ENCODE measurements at regions of chr1 and their contacts with region 1.

Region 1: GRCh38 chr1:64499966-64500365 is 30.0 kb downstream of the CACHD1 start:
- DNase-seq: no peak
- ATAC-seq: peak; percentile 66; the same call in 1 of the 2 replicates
- H3K4me3 ChIP-seq: no peak overlapping the region
- H3K27ac ChIP-seq: no peak overlapping the region
- H3K4me1 ChIP-seq: peaks cover 37% of the 10 kb centered on the region
- H3K27me3 ChIP-seq: no peaks in the 10 kb centered on the region
- CTCF ChIP-seq: peak; percentile 34

Region 2: DNA sequence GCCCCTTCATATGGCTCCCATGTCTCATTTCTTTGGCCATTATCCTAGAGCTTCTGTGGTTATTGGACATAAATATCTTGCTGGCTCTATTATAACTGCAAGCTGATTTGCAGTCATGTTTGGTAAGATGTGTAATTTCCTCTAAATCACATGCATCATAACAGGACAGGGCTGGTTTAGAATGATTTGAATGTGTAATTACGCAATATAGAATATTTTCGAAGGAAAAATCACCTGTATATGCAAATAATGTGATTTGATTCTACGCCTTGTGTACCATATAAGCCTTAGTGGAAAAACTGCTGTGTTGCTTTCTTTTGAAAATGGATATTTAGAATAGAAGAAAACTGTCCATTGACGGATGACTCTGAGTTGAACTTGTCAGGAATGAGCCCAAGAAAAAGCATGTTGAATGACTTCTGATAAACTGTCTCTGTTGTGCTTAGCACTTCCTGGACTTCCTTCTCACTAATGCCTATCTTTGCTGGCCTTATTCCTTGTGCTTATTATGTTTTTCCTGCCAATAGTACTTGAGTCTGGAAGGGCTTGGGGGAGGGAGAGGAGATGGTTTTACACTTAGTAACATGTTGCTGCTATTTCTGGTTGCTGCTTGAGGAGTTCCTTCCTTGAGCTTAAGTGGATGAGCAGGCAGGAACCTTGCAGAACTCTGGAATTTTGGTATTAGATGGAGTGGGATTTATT is 23.6 kb before region 1 on chr1:
- CTCF ChIA-PET with region 1: no interaction called
- POLR2A ChIA-PET with region 1: interaction called, 10 read pairs
- in situ Hi-C with region 1: no loop called
- intact Hi-C with region 1: no loop called
- DNase-seq: no peak
- ATAC-seq: 0 out of 2 replicates have a peak, but pooled peaks have one; percentile 30
- H3K4me3 ChIP-seq: no peak overlapping the region
- H3K27ac ChIP-seq: peak overlapping the region; percentile 58
- H3K4me1 ChIP-seq: peaks cover 83% of the 10 kb centered on the region
- H3K27me3 ChIP-seq: no peaks in the 10 kb centered on the region
- CTCF ChIP-seq: no peak

Region 3: DNA sequence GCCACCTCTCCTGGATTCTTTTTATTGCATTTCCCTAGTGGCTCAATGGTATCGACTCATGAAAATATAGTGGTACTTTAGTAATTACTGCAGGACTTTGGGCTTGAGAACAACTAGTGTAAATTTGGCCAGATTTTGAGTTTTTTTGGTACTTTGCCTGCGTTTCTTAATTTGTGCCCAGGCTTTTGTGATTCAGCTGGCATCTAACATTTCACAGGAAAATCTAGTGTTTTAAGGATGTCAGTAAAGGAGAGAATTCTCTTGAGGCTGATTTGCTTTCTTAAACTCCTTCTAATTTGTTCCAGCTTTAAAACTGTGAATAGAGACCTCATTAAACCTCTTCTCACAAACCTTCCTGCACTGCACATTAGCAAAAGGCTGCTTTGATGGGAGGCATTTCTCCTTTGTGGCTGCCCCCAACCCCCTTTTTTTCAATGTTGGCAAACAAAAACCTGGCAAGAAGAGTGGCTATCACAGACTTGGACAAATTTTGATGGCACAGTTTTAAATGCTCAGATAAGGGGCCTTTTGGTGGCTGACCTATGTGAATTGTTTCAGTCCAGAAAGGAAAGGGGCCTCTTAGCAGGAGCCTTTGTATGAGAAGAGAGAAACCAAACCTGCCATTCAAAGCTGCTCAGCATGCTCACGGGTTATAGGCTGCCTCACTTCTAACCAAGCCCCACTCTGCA is 131.5 kb after region 1 on chr1:
- CTCF ChIA-PET with region 1: no interaction called
- POLR2A ChIA-PET with region 1: interaction called, 11 read pairs
- in situ Hi-C with region 1: no loop called
- intact Hi-C with region 1: no loop called
- DNase-seq: no peak
- ATAC-seq: no peak
- H3K4me3 ChIP-seq: no peak overlapping the region
- H3K27ac ChIP-seq: no peak overlapping the region
- H3K4me1 ChIP-seq: no peaks in the 10 kb centered on the region
- H3K27me3 ChIP-seq: no peaks in the 10 kb centered on the region
- CTCF ChIP-seq: no peak

Measured in Panc1 (cell line).